Activated T-helper 1 cell treated with anti-CD3 and anti-CD28 coated beads, Interleukin-12 subunit alpha, Interleukin-12 subunit beta, Interleukin-2, Interleukin-4 antibody, amounts not matched to agents 30 ng/mL and 10 ng/mL and 1 ng/mL, durations not matched to agents 14 hours and 24 hours and 36 hours (primary cell): ENCODE measurements at regions of chr2 and their contacts with region 1.

Region 1: GRCh38 chr2:204900910-204901309 is 355.6 kb downstream of the PARD3B start:
- DNase-seq: no peak
- H3K4me3 Mint-ChIP-seq: peak overlapping the region; percentile 28
- H3K27ac Mint-ChIP-seq: peak overlapping the region; percentile 67
- H3K4me1 Mint-ChIP-seq: peaks cover 52% of the 10 kb centered on the region
- H3K27me3 Mint-ChIP-seq: no peaks in the 10 kb centered on the region

Region 2: GRCh38 chr2:203071148-203071547 is 1829.8 kb before region 1 on chr2:
- intact Hi-C with region 1: no loop called
- DNase-seq: no peak
- H3K4me3 Mint-ChIP-seq: no peak overlapping the region
- H3K27ac Mint-ChIP-seq: peak overlapping the region; percentile 16
- H3K4me1 Mint-ChIP-seq: peaks cover 9% of the 10 kb centered on the region
- H3K27me3 Mint-ChIP-seq: no peaks in the 10 kb centered on the region

Region 3: DNA sequence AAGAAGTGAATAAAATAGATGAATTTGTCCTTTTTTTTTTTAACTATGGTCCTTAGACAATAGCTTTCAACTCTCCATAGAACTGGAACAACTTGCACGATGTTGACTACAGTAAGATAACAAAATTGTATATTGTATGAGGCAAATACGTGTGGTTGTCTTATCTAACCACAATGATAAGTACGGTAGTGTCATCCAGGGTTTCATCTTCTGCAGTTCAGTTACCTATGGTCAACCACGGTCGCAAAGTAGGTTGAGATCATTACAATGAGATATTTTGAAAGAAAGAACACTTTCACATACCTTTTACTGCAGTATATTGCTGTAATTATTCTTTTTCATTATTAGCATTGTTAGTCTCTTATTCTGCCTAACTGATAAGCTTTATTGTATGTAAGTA is 60.4 kb before region 1 on chr2:
- intact Hi-C with region 1: no loop called
- DNase-seq: no peak
- H3K4me3 Mint-ChIP-seq: no peak overlapping the region
- H3K27ac Mint-ChIP-seq: no peak overlapping the region
- H3K4me1 Mint-ChIP-seq: peaks cover 27% of the 10 kb centered on the region
- H3K27me3 Mint-ChIP-seq: peaks cover 4% of the 10 kb centered on the region

Region 4: DNA sequence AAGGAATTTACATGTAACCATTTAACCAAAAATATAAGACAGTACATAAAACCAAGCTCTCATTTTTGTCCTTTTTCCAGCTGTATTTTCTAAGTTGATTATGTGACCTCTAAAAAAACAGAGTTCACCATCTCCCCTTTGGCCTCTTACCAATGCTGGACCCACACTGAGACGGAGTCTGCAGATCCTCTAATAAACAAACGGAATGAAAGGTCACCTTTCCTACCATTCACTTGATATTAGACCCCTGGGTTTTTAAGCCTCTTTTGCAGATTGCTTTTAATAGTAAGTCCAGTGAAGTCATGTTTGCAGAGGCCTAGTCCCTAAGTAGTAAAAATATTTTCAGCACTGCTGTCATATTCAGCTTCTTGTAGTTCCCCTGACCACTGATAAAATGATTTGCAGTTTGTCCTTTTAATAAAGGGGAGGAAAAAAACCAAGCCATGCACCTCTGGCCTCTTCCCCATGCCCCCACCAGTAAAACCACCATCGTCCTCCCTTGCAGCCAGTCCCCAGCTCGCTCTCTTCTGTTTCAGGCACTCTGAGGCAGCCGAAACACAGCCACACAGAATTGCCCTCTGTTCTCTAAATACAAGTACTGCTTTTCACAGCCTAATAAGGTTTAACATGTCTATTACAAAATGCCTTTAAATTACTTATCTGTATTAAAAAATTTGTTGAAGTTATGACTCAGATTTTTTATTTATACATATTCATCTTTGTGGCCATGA is 71.9 kb after region 1 on chr2:
- intact Hi-C with region 1: loop called (anchors 1 kb)
- DNase-seq: no peak
- H3K4me3 Mint-ChIP-seq: no peak overlapping the region
- H3K27ac Mint-ChIP-seq: peak overlapping the region; percentile 49
- H3K4me1 Mint-ChIP-seq: peaks cover 38% of the 10 kb centered on the region
- H3K27me3 Mint-ChIP-seq: no peaks in the 10 kb centered on the region

Region 5: GRCh38 chr2:205283736-205284270 is 382.9 kb after region 1 on chr2:
- intact Hi-C with region 1: no loop called
- DNase-seq: no peak
- H3K4me3 Mint-ChIP-seq: no peak overlapping the region
- H3K27ac Mint-ChIP-seq: no peak overlapping the region
- H3K4me1 Mint-ChIP-seq: no peaks in the 10 kb centered on the region
- H3K27me3 Mint-ChIP-seq: peaks cover 9% of the 10 kb centered on the region